A673 (cell line): ENCODE measurements at regions of chr12 and their contacts with region 1.

Region 1: GRCh38 chr12:3658327-3659163 is 94.4 kb downstream of the CRACR2A start:
- DNase-seq: peak; percentile 70
- H3K4me3 ChIP-seq: no peak overlapping the region
- H3K27ac ChIP-seq: no peak overlapping the region
- H3K4me1 ChIP-seq: no peaks in the 10 kb centered on the region
- H3K27me3 ChIP-seq: peaks cover 43% of the 10 kb centered on the region
- CTCF ChIP-seq: peak; percentile 81

Region 2: DNA sequence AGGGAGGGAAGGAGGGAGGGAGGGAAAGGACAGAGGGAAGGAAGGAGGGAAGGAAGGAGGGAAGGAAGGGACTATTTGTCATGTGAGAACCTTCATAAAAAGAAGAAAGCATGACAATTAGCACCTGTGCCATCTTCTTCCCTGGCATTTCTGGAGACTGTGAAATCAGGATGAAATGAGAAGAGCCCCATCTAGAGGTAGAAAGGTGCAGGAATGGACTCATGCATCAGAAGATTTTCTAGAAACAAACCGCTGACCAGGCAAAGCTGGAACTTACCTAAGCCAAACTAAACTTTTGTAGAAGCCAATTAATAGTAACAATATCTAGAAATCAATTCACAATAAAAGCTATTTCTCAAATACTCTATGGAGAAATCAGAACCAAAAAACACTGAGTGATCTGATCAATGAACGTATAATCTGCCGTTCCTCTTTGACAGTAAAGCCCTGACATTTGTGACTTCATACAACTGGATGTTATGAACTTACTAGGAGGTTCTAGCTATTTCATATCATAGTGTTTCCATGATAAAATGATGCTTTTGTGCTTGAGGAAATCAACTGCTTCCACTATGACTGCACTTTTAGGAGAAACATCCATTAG is 118.8 kb after region 1 on chr12:
- CTCF ChIA-PET with region 1: no interaction called
- POLR2A ChIA-PET with region 1: no interaction called
- intact Hi-C with region 1: loop called (anchors 2 kb)
- DNase-seq: peak; percentile 47
- H3K4me3 ChIP-seq: no peak overlapping the region
- H3K27ac ChIP-seq: no peak overlapping the region
- H3K4me1 ChIP-seq: no peaks in the 10 kb centered on the region
- H3K27me3 ChIP-seq: peaks cover 13% of the 10 kb centered on the region
- CTCF ChIP-seq: peak; percentile 74

Region 3: DNA sequence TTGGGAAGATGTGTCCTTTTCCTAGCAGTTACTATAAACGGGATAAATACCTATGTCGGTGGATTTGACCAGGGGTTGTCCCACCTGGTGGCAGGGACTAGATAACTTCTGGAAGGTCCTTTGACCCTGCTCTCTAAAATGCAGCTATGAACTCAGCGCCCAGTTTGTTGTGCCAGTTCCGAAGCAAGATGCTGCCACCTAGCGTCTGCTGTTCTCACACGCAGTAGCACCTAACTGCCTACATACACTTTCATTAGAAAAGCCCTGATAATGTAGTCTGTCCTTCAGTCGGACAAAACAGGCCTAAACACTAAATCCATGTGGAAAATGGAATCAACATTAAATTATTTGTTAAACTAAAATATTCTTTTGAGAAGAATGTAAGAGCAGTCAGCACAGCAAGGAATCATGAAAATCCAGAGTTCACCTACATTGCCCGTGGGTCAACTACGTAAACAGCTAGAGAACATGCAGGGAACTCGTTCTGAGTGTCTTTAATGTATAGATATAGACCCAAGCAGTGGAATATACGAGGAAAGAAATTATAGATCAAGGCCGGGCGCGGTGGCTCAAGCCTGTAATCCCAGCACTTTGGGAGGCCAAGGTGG is 145.4 kb after region 1 on chr12:
- CTCF ChIA-PET with region 1: interaction called, 16 read pairs
- POLR2A ChIA-PET with region 1: no interaction called
- intact Hi-C with region 1: loop called (anchors 2 kb)
- DNase-seq: peak; percentile 62
- H3K4me3 ChIP-seq: no peak overlapping the region
- H3K27ac ChIP-seq: no peak overlapping the region
- H3K4me1 ChIP-seq: no peaks in the 10 kb centered on the region
- H3K27me3 ChIP-seq: no peaks in the 10 kb centered on the region
- CTCF ChIP-seq: peak; percentile 92